ENCODE measurements at regions of chr2 and their contacts with region 1.

Region 1: DNA sequence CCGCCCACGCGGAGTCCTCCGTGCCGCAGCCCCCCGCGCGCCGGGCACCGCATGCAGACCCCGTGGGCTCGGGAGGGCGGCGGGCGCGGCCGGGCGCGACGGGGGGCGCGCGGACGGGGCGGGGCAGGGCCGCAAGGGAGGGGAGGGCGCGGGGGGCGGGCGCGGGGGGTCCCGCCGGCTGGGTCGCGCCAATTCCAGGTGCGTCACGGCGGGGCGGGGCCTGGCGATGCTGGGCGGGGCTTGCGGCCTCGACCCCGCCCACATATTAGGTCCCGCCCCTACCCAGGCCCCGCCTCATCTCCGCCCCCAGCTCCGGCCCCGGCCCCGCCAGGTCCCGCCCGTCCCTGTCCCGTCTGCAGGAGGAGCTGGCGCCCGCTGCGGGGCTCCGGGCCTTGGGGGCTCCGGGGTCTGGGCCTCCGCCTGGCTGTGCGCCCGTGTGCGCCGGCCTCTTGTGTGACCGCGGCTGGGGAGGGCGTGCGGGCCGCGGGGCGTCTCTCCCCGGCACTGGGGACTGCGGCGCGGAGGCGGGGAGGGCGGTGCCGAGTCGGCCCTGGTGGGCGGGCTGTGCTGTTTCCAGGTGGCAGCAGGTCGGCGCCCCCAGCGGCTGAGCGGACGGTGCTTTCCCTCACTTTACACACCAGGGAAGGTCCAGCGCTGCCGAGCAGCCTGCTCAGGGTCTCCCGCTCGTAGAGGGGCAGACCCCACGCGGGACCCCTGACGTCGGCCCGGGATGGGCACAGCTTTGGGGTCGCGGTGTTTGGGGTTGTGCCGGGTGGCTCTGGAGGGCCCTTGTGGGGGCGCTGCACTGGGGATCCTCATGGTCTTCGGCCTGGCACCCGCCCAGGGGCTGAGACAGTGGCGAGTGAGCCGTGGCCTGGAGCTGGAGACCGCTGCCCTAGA is 543 bp downstream of the ING5 start:
- DNase-seq: peak; percentile 52
- H3K4me3 ChIP-seq: peak overlapping the region; percentile 80
- H3K27ac ChIP-seq: peak overlapping the region; percentile 39
- H3K27me3 ChIP-seq: no peaks in the 10 kb centered on the region
- CTCF ChIP-seq: peak; percentile 37

Region 2: GRCh38 chr2:241445426-241445825 is 257.0 kb before region 1 on chr2:
- CTCF ChIA-PET with region 1: no interaction called
- POLR2A ChIA-PET with region 1: no interaction called
- DNase-seq: no peak
- H3K4me3 ChIP-seq: no peak overlapping the region
- H3K27ac ChIP-seq: no peak overlapping the region
- H3K27me3 ChIP-seq: no peaks in the 10 kb centered on the region
- CTCF ChIP-seq: no peak

Region 3: DNA sequence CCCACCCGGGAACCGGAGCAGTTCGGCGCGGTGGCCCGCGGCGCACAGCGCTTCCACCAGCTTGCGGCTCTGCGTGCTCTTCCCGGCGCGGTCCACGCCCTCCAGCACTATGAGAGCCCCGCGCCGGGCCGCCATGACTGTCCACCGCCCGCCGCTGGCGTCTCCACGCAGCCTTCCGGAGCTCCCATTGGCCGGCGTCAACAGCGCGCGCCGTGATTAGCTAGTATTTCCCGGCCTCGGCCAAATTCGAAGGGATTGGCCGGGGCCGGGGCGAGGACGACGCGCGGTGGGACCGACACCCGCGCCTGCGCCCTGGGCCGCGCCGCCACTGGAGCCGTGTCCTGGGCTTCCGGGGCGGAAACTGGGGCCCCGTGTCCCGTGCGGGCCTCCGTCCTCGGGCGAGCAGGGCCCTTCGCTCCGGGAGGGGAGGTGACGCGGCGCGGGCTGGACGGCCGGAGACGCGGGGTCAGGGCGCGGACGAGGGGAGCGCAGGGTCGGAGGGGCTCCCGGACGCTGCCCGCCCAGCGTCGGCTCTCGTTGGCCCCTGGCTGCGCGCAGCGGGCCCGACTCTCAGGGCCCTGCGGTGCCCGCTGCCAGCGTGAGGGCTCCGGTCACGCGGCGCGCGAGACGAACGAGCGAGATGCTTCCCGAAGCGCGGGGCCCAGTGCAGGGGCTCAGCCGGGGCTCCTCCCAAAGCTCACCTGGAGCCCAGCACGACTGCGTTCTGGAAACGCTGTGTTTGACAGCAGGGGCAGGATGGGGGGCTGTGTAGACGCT is 15.5 kb before region 1 on chr2 and contains the start of gene DTYMK:
- CTCF ChIA-PET with region 1: interaction called, 9 read pairs
- POLR2A ChIA-PET with region 1: interaction called, 41 read pairs
- DNase-seq: peak; percentile 86
- H3K4me3 ChIP-seq: peak within 1 kb of the TSS; percentile 95
- H3K27ac ChIP-seq: peak within 1 kb of the TSS; percentile 83
- H3K27me3 ChIP-seq: no peaks in the 10 kb centered on the region
- CTCF ChIP-seq: no peak
- polyA plus RNA-seq, gene DTYMK: 28.4 and 29.6 TPM in 2 replicates

Region 4: DNA sequence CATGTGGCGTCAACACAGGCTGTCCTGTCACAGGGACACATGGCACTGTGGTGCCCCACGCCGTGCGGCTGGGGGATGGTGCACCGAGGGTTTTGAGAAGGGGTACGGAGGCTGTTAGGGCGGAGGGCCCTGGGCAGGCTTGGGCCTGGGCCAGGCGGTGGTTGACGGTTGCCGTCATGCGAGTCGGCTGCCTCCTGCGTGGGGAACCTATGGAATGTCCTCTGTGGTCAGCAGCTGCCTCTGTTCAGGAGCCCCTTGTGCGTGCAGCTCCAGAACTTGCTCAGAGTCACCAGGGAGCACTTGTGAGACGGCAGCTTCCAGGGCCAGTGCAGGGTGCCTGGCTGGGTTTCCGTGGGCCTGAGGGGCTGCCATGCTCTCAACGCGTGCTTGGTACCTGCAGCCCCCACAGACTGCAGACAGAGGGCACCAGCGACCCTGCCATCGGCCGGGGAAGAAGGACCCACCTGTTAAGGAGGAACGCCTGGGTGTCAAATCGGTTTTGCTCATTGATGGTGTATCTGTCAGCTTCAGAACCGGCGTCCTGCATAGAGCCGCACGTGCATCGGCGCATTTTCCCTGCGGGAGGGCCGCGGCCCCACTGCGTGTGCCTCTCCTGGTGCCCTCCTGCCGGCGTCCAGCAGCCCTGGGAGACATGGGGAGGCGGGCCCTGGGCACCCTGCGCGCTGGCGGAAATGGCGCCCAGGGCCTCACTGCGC is 22.0 kb after region 1 on chr2:
- CTCF ChIA-PET with region 1: no interaction called
- POLR2A ChIA-PET with region 1: no interaction called
- DNase-seq: no peak
- H3K4me3 ChIP-seq: no peak overlapping the region
- H3K27ac ChIP-seq: no peak overlapping the region
- H3K27me3 ChIP-seq: no peaks in the 10 kb centered on the region
- CTCF ChIP-seq: no peak

Region 5: DNA sequence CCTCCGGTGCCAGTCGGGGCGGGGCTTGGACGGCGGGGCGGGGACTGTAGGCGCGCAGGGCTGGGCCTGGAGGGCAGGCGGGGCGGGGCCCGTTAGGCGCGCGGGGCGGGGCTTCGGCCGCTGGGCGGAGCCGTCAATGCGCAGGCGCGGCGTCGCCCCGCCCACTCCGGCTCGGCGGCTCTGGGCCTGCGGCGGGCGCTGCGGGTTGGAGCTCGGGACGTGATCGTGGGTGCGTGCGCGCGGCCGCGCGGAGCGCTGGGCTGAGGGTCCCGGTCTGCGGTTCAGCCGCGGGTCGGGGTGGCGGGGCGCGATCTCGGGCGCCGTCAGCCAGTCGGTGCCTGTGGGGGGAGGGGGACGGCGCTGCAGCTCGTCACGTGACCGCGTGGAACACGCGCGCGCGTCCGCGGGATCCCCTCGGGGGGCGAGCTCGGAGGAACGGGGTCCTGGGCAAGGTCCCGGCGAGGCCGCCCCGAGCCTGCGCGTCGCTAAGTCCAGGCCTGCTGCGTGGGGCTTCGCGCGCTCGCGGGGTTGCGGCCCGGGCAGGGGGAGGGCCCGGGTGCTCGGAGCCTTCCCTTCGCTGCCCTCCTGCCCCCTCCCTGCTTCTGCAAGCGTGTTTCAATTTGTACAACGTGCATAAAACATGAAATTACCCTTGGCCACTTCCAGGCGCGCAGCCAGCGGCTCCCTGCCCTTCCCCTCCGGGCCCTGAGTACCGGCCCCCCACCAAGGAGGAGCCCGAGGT is 32.3 kb after region 1 on chr2 and contains the start of gene D2HGDH:
- CTCF ChIA-PET with region 1: no interaction called
- POLR2A ChIA-PET with region 1: interaction called, 17 read pairs
- DNase-seq: peak; percentile 36
- H3K4me3 ChIP-seq: peak within 1 kb of the TSS; percentile 77
- H3K27ac ChIP-seq: no peak within 1 kb of the TSS
- H3K27me3 ChIP-seq: no peaks in the 10 kb centered on the region
- CTCF ChIP-seq: no peak
- polyA plus RNA-seq, gene D2HGDH: 7.3 and 9.5 TPM in 2 replicates

Measured in AG04450 (cell line).